ENCODE measurements at regions of chr4 and their contacts with region 1.

Region 1: DNA sequence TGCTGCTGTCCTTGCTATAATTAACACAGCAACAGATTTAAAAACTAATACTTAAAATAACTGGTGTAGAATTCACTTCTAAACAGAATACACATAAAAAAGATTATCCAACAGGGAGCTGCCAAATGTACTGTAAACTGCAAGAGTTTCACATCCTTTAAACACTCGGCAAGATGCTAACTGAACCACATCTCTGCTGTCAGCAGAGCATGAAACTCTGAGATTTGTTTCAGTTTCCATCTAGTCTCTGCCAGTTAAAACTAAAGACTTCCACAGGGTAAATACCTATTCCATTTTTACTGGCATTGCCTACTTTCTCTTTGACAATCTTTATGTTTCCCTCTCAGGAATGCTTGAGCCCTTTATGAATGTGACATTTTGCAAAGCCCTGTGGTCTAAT is 127.7 kb downstream of the SLC7A11 start:
- DNase-seq: peak; percentile 87
- H3K4me3 ChIP-seq: peak overlapping the region; percentile 43
- H3K27ac ChIP-seq: peak overlapping the region; percentile 83
- H3K4me1 ChIP-seq: peaks cover 40% of the 10 kb centered on the region
- CTCF ChIP-seq: no peak

Region 2: GRCh38 chr4:137961051-137961438 is 153.4 kb before region 1 on chr4:
- CTCF ChIA-PET with region 1: no interaction called
- POLR2A ChIA-PET with region 1: no interaction called
- intact Hi-C with region 1: no loop called
- DNase-seq: no peak
- H3K4me3 ChIP-seq: no peak overlapping the region
- H3K27ac ChIP-seq: no peak overlapping the region
- H3K4me1 ChIP-seq: no peaks in the 10 kb centered on the region
- CTCF ChIP-seq: no peak

Region 3: GRCh38 chr4:138190452-138190858 is 76.0 kb after region 1 on chr4:
- CTCF ChIA-PET with region 1: no interaction called
- POLR2A ChIA-PET with region 1: interaction called, 5 read pairs
- intact Hi-C with region 1: loop called (anchors 2 kb)
- DNase-seq: peak; percentile 84
- H3K4me3 ChIP-seq: peak overlapping the region; percentile 47
- H3K27ac ChIP-seq: peak overlapping the region; percentile 93
- H3K4me1 ChIP-seq: peaks cover 46% of the 10 kb centered on the region
- CTCF ChIP-seq: no peak

Region 4: GRCh38 chr4:138242076-138242833 is 127.8 kb after region 1 on chr4 and contains the start of gene SLC7A11:
- CTCF ChIA-PET with region 1: no interaction called
- POLR2A ChIA-PET with region 1: interaction called, 9 read pairs
- intact Hi-C with region 1: loop called (anchors 1 kb)
- DNase-seq: peak; percentile 97
- H3K4me3 ChIP-seq: peak within 1 kb of the TSS; percentile 76
- H3K27ac ChIP-seq: peak within 1 kb of the TSS; percentile 91
- H3K4me1 ChIP-seq: peaks cover 30% of the 10 kb centered on the region
- CTCF ChIP-seq: no peak
- total RNA-seq, gene SLC7A11: 5.2 and 5.7 TPM in 2 replicates

Measured in OCI-LY7 (cell line).